IMR-90 (cell line): ENCODE measurements at regions of chr9 and their contacts with region 1.

Region 1: DNA sequence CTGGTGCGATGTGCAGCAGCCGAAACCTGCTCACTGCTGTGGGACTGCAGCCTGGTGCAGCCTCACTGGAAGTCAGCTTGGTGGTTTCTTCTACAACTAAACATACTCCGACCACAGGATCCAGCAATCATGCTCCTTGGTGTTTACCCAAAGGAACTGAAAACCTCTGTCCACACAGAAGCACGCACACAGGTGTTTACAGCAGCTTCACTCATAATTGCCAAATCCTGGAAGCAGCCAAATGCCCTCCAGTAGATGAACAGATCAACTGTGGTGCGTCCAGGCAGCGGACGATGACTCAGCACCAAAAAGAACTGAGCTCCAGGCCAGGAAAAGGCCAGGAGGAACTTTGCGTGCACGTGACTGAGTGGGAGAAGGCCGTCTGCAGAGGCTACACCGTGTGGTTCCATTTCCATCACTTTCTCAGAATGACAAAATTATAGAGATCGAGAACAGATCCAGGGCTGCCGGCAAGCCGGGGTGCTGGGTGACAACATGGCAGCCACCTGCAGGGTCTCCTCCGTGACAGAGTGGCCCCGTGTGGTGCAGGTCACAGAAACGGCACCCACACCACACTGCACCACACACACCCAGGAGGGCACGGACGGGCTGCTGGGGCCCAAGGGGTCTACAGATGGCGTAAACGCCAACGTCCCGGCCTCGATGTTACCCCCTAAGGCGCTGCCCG is 23.1 kb upstream of the NSMF start:
- DNase-seq: peak; percentile 93
- ATAC-seq: peak; percentile 71
- H3K4me3 ChIP-seq: no peak overlapping the region
- H3K27ac ChIP-seq: peak overlapping the region; percentile 5; the same call in 1 of the 2 replicates
- H3K4me1 ChIP-seq: peaks cover 6% of the 10 kb centered on the region
- H3K27me3 ChIP-seq: peaks cover 13% of the 10 kb centered on the region; the same call in 1 of the 2 replicates
- CTCF ChIP-seq: no peak
- POLR2A ChIP-seq: no peak
- RAD21 ChIP-seq: no peak

Region 2: GRCh38 chr9:137519553-137519952 is 37.3 kb after region 1 on chr9:
- CTCF ChIA-PET with region 1: no interaction called
- POLR2A ChIA-PET with region 1: no interaction called
- dilution Hi-C with region 1: no loop called
- in situ Hi-C with region 1: no loop called
- intact Hi-C with region 1: loop called (anchors 2 kb)
- DNase-seq: no peak
- ATAC-seq: no peak
- H3K4me3 ChIP-seq: no peak overlapping the region
- H3K27ac ChIP-seq: no peak overlapping the region
- H3K4me1 ChIP-seq: no peaks in the 10 kb centered on the region
- H3K27me3 ChIP-seq: no peaks in the 10 kb centered on the region
- CTCF ChIP-seq: no peak
- POLR2A ChIP-seq: no peak
- RAD21 ChIP-seq: no peak